ENCODE measurements at regions of chr14 and their contacts with region 1.

Region 1: GRCh38 chr14:92531106-92531873 is 17.7 kb downstream of the RIN3 start:
- DNase-seq: peak; percentile 70
- ATAC-seq: peak; percentile 62
- H3K4me3 Mint-ChIP-seq: peak overlapping the region; percentile 14
- H3K27ac Mint-ChIP-seq: peak overlapping the region; percentile 89
- H3K4me1 Mint-ChIP-seq: peaks cover 62% of the 10 kb centered on the region
- H3K27me3 Mint-ChIP-seq: no peaks in the 10 kb centered on the region

Region 2: DNA sequence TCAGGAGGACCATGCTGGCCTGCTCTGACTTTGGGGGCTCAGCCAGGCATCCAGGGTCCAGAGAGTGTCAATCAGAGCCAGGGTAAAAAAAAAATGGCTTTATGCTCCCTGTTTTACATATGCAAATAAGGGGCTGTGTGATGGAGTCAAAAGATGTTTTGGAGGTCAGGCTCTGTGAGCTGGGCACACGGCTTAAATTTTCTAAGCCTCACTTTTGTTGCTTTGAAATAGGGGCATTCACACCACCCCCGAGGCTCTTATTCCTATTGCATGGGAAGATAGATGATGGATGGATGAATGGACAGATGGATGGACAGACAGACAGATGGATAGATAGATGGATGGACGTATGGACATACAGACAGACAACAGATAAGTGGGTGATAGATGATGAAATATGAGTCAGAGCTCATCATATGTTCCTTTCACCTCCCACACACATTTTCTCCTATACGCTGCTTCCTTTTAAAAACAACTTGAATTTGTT is 25.0 kb after region 1 on chr14:
- CTCF ChIA-PET with region 1: no interaction called
- POLR2A ChIA-PET with region 1: interaction called, 3 read pairs
- intact Hi-C with region 1: loop called in 1 of 2 experiments (anchors 2 kb)
- DNase-seq: no peak
- ATAC-seq: peak; percentile 64
- H3K4me3 Mint-ChIP-seq: no peak overlapping the region
- H3K27ac Mint-ChIP-seq: peak overlapping the region; percentile 55
- H3K4me1 Mint-ChIP-seq: peaks cover 58% of the 10 kb centered on the region
- H3K27me3 Mint-ChIP-seq: no peaks in the 10 kb centered on the region

Measured in activated CD4-positive, alpha-beta T cell treated with anti-CD3 and anti-CD28 coated beads for 36 hours (primary cell).